ENCODE measurements at regions of chr1 and their contacts with region 1.

Region 1: DNA sequence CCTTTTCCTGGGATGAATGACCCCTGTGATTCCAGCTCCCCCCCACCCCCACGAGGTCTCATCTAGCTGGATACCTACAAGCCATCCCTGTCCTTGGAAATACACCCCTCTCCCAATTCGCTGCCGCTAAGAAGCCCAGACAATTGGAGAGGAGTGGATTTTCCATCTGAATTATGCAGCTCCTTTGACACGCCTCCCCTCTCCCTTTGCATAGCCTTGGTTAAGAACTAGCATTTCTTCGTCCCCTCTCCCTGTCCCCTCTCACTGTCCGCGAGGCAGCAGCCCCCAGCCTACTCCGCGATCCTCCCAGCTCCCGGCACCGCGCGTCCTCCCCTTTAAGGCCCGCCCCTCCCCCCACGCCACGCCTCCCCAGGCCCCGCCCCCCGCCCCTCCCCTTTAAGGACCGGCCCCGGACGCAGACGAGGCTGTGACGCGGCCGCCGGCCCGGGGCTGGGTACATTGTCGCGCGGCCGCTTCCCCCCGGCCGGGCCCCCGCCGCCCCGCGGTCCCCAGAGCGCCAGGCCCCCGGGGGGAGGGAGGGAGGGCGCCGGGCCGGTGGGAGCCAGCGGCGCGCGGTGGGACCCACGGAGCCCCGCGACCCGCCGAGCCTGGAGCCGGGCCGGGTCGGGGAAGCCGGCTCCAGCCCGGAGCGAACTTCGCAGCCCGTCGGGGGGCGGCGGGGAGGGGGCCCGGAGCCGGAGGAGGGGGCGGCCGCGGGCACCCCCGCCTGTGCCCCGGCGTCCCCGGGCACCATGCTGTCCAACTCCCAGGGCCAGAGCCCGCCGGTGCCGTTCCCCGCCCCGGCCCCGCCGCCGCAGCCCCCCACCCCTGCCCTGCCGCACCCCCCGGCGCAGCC is at the start of gene MAPKAPK2:
- DNase-seq: peak; percentile 85
- ATAC-seq: peak; percentile 73 to 88 (median 81)
- H3K4me3 ChIP-seq: peak within 1 kb of the TSS; percentile 50 to 95 (median 86)
- H3K27ac ChIP-seq: peak within 1 kb of the TSS; percentile 91 to 99 (median 98)
- H3K4me1 ChIP-seq: peaks cover 20 to 55% (median 41%) of the 10 kb centered on the region in 9 donors
- H3K27me3 ChIP-seq: no peaks in the 10 kb centered on the region
- CTCF ChIP-seq: no peak
- total RNA-seq, gene MAPKAPK2: 169 to 323 (median 224) TPM

Region 2: DNA sequence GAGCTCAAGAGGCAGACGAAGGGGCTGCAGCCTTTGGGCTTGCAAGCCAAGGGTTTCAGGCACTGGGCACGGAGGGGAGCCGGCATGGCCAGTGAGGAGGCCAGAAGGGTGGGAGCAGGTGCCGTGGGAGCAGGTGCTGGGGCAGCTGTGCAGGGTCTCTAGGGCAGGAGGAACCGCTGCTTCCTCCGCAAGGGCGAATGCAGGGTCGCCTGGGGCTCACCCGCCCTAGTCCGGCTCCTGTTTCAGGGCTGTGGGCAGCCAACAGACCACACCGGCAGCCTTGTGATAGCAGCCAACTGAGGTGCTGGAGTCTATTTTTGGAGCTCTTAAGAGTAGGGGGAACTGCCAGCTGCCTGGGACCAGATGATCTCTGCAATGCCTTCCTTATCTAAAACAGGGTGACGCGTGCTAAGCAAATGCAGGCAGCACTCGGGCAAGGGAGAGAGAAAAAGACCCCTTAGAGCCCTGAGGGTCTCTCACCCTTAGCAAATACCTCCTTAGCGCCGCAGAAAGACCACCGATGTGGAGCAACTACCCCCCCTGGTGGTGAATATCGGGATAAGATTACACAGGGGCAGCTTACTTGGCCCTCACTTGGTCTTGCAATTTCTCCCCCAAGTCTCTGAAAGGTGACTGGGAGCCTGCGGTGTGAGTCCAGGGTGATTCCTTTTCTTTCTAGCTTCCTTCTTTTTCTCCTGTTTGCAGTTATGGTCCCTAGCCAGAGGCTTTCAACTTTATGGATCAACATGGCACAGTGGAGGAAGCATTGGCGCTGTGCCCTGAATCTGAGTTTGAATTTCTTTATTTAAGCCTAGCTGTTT is 20.7 kb before region 1 on chr1:
- intact Hi-C with region 1: loop called in 2 of 10 experiments (anchors 2 kb)
- DNase-seq: peak; percentile 63 to 77
- ATAC-seq: peak; percentile 64 to 80 (median 77)
- H3K4me3 ChIP-seq: peak overlapping the region in 7 of 10 donors; percentile 6 to 39 (median 29)
- H3K27ac ChIP-seq: peak overlapping the region; percentile 71 to 96 (median 90)
- H3K4me1 ChIP-seq: peaks cover 3 to 76% (median 44%) of the 10 kb centered on the region in 9 donors
- H3K27me3 ChIP-seq: peaks cover 0 to 7% (median 0%) of the 10 kb centered on the region in 7 donors
- CTCF ChIP-seq: peak; percentile 78 to 89 (median 85)